Cardiac septum (tissue), 1 donor: ENCODE measurements at regions of chr15 and their contacts with region 1.

Region 1: GRCh38 chr15:69058830-69059556 is 44.5 kb downstream of the NOX5 start:
- DNase-seq: peak; percentile 91

Region 2: DNA sequence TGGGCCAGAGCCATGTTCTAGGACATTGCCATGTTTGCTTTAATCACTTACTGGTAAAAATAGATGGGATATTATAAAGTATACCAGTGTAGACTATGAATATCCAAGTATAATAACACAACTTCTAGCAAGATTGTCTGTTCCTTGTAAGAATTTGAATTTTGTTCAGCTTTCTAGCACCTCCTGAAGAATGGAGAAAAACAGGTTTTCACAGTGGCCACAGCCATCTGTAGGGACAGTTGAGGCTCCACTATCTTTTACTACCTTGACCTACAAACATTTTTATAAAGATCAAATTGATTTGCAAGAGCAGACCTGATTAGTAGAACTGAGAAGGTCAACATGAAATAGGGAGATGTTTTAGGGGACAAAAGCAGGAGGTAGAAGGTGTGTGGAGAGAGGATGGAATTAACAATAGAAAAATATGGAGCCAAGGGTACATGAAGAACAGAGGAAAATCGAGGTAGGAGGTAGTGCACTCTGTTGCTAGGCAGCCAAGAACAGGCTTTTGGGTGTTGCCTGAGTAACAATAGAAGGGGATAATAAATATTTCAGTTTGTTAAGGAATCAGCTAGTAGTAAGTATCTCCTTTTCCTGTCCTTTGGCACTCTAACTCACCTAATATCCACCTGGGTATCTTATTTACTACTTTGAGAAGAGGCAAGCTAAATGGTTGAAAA is 119.6 kb before region 1 on chr15:
- intact Hi-C with region 1: no loop called
- DNase-seq: no peak

Region 3: GRCh38 chr15:69160141-69160993 is 101.4 kb after region 1 on chr15 and contains the start of gene GLCE:
- intact Hi-C with region 1: loop called (anchors 5 kb)
- DNase-seq: peak; percentile 98
- total RNA-seq, gene GLCE: 6.2 TPM

Region 4: GRCh38 chr15:69225355-69226025 is 166.5 kb after region 1 on chr15:
- intact Hi-C with region 1: loop called (anchors 2 kb)
- DNase-seq: no peak

Region 5: GRCh38 chr15:69265347-69265955 is 206.5 kb after region 1 on chr15:
- intact Hi-C with region 1: loop called (anchors 2 kb)
- DNase-seq: no peak

Region 6: GRCh38 chr15:69394556-69395282 is 335.7 kb after region 1 on chr15:
- intact Hi-C with region 1: loop called (anchors 1 kb)
- DNase-seq: peak; percentile 91